K562 (cell line): ENCODE measurements at regions of chr20 and their contacts with region 1.

Region 1: DNA sequence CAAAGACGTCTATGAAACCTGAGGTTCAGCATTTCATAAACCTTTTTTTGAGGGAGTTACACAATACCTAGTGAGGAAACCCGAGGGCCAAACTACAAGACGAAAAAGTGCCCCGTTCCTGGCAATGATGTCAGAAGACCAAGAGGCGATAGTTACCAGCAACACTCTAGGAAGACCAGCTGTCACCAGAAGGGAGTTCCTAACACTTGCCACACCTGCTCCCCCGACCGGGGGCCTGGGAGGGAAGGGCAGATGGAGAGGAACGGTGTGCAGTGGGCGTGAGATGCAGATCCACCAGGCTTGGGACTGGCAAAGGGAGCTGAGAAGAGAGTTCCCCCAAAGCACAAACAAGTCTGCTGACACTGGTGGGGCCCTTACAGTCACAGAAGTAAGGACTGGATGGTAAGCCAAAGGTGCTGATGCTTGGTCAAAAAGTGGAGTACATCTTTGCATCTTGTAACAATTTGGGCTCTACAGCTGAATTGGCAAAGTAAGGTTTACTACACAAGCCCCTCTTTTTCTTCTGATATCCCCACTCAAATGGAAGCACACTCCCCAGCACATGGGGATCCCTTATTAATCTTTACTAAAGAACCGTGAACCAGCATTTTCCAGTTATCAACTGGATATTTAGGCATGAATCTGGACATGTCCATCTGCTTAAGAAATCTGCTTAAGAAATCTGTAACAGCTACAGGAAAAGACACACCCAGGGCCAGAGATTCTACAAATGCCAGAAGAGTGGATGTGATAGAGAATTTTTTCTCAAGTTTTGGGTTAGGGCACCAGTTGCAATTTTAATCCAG is 38.5 kb downstream of the PANK2 start:
- DNase-seq: peak in 1 of 4 experiments; percentile 18
- ATAC-seq: peak; percentile 8
- H3K4me3 ChIP-seq: no peak overlapping the region
- H3K27ac ChIP-seq: no peak overlapping the region
- H3K4me1 ChIP-seq: peaks cover 30 to 31% of the 10 kb centered on the region in 2 experiments; a peak in 4 of 5 replicates
- H3K27me3 ChIP-seq: no peaks in the 10 kb centered on the region
- CTCF ChIP-seq: no peak
- EP300 ChIP-seq: no peak
- POLR2A ChIP-seq: peak; percentile 57
- RAD21 ChIP-seq: no peak

Region 2: DNA sequence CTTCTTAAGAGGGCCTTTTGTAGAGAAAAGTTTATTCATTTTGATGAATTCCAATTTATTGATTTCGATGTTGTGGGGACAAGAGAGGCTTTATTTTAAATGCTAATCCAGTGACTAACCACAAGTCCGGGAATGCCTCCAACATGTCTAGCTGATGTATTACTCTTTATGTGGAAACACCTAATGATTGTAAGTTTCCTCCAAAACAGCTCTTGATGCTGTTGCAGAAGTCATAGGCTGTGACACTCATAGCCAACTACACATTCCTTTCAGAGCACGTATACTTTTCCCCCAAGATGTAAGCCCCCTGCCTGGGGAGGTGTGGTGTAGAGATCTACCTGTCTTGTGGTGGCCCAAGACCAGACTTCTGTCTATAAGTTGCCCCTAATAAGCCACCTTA is 149.0 kb after region 1 on chr20:
- CTCF ChIA-PET with region 1: no interaction called
- POLR2A ChIA-PET with region 1: interaction called, 8 read pairs
- in situ Hi-C with region 1: no loop called
- intact Hi-C with region 1: loop called (anchors 1 kb)
- DNase-seq: no peak
- ATAC-seq: no peak
- H3K4me3 ChIP-seq: no peak overlapping the region
- H3K27ac ChIP-seq: peak overlapping the region; percentile 28; the same call in 1 of the 3 replicates
- H3K4me1 ChIP-seq: peaks cover 14 to 55% of the 10 kb centered on the region in 2 experiments
- H3K27me3 ChIP-seq: no peaks in the 10 kb centered on the region
- CTCF ChIP-seq: no peak
- EP300 ChIP-seq: no peak
- POLR2A ChIP-seq: no peak
- RAD21 ChIP-seq: no peak

Region 3: DNA sequence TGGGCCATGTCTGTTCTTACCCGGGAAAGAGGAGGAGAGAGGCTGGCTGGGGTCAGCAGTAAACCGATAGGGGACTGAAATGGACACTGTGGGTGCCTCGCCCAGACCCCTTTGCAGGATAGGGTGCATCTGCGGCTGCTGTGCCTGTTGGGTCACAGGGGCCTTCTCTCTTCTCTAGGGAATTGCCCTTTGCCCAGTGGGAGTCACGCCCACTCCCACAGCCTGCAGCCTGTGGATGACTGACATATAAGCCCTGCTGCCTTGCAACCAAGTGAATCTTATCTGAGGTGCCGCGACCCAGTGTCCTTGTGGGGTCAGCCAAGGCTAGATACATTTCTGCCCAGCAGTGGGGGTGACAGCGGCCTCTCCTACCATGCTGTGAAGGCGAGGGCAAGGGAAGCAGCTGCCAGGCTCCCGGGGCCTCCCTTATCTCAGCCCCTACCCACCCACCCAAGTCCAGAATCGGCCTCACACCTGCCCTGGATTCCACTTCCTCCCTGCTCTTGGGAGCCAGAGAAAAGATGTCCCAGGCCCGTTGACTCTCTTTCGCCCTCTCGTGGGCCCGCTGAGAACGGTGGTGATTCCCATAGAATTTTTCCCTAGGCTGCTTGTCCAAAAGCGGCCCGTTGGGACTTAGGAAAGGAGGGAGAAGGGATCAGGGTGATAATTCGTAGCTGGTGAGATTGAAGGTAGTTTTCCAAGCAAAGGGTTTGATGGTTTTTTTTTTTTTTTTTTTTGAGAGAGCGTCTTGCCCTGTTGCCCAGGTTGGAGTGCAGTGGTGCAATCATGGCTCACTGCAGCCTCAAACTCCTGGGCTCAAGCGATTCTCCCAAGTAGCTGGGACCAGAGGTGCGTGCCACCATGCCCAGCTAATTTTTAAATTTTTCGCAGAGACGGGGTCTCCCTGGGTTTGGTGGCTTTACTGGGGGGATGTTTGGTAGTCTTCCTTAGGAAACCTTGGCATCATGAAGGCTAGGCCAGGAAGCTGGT is 164.1 kb after region 1 on chr20:
- CTCF ChIA-PET with region 1: no interaction called
- POLR2A ChIA-PET with region 1: no interaction called
- in situ Hi-C with region 1: no loop called
- intact Hi-C with region 1: loop called (anchors 5 kb)
- DNase-seq: peak; percentile 63 to 74 (median 70)
- ATAC-seq: peak; percentile 90
- H3K4me3 ChIP-seq: no peak overlapping the region
- H3K27ac ChIP-seq: peak overlapping the region; percentile 62; the same call in 2 of the 3 replicates
- H3K4me1 ChIP-seq: peaks cover 7 to 20% of the 10 kb centered on the region in 2 experiments
- H3K27me3 ChIP-seq: no peaks in the 10 kb centered on the region
- CTCF ChIP-seq: peak; percentile 72 to 77 (median 75)
- EP300 ChIP-seq: no peak
- POLR2A ChIP-seq: no peak
- RAD21 ChIP-seq: peak; percentile 43 to 64; a peak in 3 of 4 replicates

Region 4: DNA sequence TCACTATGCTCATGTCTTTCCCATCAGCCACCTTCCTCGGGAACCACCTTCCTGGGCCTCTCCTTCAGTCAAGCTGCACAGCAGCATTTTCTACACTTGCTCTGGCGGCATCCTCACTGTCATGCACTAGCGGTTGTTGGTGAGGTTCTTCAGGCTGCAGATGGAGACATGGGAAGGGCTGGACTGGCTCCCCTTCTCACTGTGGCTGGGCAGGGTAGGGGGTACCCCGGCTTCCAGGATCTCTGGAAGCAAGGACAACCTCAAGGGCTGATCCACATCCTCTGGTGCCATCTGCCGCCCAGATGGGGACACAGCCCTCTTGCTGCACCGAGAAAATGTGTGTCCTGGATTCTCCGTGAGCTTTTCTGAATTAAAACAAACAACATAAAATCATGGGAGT is 267.8 kb after region 1 on chr20:
- CTCF ChIA-PET with region 1: no interaction called
- POLR2A ChIA-PET with region 1: no interaction called
- in situ Hi-C with region 1: no loop called
- intact Hi-C with region 1: loop called (anchors 10 kb)
- DNase-seq: peak; percentile 36 to 52 (median 40)
- ATAC-seq: peak; percentile 66
- H3K4me3 ChIP-seq: no peak overlapping the region
- H3K27ac ChIP-seq: no peak overlapping the region
- H3K4me1 ChIP-seq: peaks cover 10 to 35% of the 10 kb centered on the region in 2 experiments
- H3K27me3 ChIP-seq: no peaks in the 10 kb centered on the region
- CTCF ChIP-seq: peak; percentile 64 to 74 (median 72)
- EP300 ChIP-seq: no peak
- POLR2A ChIP-seq: no peak
- RAD21 ChIP-seq: peak; percentile 66 to 82